Ascending aorta (tissue), 2 donors: ENCODE measurements at regions of chr19 and their contacts with region 1.

Region 1: GRCh38 chr19:13012690-13013608 is 17.7 kb downstream of the NFIX start:
- DNase-seq: peak in 1 of 2 donors; percentile 85
- H3K4me3 ChIP-seq: peak overlapping the region; percentile 57 to 62
- H3K27ac ChIP-seq: peak overlapping the region; percentile 95 to 97
- H3K4me1 ChIP-seq: peaks cover 29 to 69% of the 10 kb centered on the region in 2 donors
- H3K27me3 ChIP-seq: no peaks in the 10 kb centered on the region
- CTCF ChIP-seq: no peak

Region 2: DNA sequence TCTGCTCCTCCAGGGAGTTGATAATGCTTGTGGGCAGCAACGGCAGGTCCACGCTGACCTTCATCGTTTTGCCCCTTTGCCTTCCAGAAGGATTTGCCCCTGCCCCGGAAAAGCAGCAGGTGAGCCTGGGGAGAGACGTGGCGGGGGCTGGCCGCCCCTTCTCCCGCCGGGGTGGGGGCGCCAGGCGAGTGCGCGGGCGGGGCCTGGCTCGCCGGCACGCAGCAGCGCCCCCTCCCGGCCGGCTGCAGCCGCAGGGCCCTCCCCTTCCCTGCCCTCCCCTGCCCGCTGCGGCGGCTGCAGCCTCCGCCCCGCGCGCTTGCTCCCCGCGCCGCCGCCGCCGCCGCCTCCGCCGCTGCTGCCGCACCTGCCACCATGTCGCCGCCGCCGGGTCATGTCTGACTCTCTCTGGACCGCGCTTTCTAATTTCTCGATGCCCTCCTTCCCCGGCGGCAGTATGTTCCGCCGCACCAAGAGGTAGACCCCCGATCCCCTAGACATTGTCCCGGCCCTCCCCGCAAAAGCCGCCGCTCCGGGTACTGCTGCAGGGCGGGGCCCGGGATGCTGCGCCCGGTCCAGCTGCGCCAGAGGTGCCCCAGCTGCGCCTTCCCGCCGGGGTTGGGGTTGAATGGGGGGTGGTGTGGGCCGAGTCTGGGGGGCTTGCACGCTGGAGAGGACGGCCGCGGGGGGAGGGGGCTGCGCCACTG is 174.6 kb before region 1 on chr19 and contains the start of gene MAST1:
- intact Hi-C with region 1: no loop called
- DNase-seq: no peak
- H3K4me3 ChIP-seq: peak within 1 kb of the TSS; percentile 34 to 49
- H3K27ac ChIP-seq: no peak within 1 kb of the TSS
- H3K4me1 ChIP-seq: peaks cover 6 to 9% of the 10 kb centered on the region in 2 donors
- H3K27me3 ChIP-seq: peaks cover 55% of the 10 kb centered on the region
- CTCF ChIP-seq: peak in 1 of 3 experiments; percentile 34
- total RNA-seq, gene MAST1: 2.0 TPM

Region 3: GRCh38 chr19:12994701-12995595 is 18.0 kb before region 1 on chr19 and contains the start of gene NFIX:
- intact Hi-C with region 1: loop called (anchors 1 kb)
- DNase-seq: peak in 1 of 2 donors; percentile 86
- H3K4me3 ChIP-seq: peak within 1 kb of the TSS; percentile 92 to 97
- H3K27ac ChIP-seq: peak within 1 kb of the TSS; percentile 95 to 98
- H3K4me1 ChIP-seq: peaks cover 3 to 33% of the 10 kb centered on the region in 2 donors
- H3K27me3 ChIP-seq: no peaks in the 10 kb centered on the region
- CTCF ChIP-seq: no peak
- total RNA-seq, gene NFIX: 76.5 TPM

Region 4: GRCh38 chr19:13002166-13002898 is 10.6 kb before region 1 on chr19:
- intact Hi-C with region 1: loop called (anchors 1 kb)
- DNase-seq: peak in 1 of 2 donors; percentile 87
- H3K4me3 ChIP-seq: peak overlapping the region; percentile 44 to 65
- H3K27ac ChIP-seq: peak overlapping the region; percentile 95 to 98
- H3K4me1 ChIP-seq: peaks cover 20 to 80% of the 10 kb centered on the region in 2 donors
- H3K27me3 ChIP-seq: no peaks in the 10 kb centered on the region
- CTCF ChIP-seq: peak; percentile 7 to 60 (median 26)

Region 5: GRCh38 chr19:13060964-13061927 is 48.3 kb after region 1 on chr19:
- intact Hi-C with region 1: no loop called
- DNase-seq: peak in 1 of 2 donors; percentile 92
- H3K4me3 ChIP-seq: peak overlapping the region; percentile 44 to 65
- H3K27ac ChIP-seq: peak overlapping the region; percentile 99
- H3K4me1 ChIP-seq: peaks cover 81 to 97% of the 10 kb centered on the region in 2 donors
- H3K27me3 ChIP-seq: no peaks in the 10 kb centered on the region
- CTCF ChIP-seq: peak; percentile 97 to 99 (median 97)